Activated CD4-positive, alpha-beta T cell treated with anti-CD3 and anti-CD28 coated beads for 36 hours (primary cell): ENCODE measurements at regions of chr7 and their contacts with region 1.

Region 1: DNA sequence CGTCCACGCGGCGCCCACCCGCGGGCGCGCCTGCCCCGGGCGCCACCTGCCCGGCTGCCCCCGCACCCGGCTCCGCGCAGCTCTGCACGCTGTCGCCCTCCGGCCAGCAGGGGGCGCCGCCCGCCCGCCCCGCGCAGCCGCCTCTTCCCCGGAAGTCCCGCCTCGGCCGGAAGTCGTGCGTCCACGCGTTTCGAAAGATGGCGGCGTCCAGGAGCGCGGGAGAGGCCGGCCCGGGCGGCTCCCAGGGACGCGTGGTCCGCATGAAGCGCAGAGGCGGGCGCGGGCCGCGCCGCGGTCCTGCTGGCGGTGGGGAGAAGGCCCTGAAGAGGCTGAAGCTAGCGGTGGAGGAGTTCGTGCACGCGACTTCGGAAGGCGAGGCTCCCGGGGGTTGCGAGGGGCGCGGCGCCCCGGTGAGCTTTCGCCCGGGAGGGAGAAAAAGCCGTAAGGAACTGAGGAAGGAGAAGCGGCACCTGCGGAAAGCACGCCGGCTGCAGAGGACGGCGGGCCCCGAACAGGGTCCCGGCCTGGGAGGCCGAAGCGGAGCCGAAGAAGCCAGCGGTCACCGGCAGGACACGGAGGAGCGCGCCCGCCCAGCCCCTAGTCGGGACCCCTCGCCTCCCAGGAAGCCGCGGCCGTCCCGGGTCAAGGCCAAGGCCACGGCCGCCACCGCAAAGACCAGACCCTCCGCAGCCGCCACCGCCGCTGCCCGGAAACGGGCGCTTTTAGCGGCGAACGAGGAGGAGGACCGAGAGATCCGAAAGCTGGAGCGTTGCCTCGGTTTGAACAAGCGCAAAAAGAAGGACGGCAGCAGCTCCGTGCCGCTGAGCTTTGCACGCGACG is at the start of gene NOM1:
- DNase-seq: peak; percentile 95
- ATAC-seq: peak; percentile 92
- H3K4me3 Mint-ChIP-seq: peak within 1 kb of the TSS; percentile 94
- H3K27ac Mint-ChIP-seq: peak within 1 kb of the TSS; percentile 84
- H3K4me1 Mint-ChIP-seq: peaks cover 26% of the 10 kb centered on the region
- H3K27me3 Mint-ChIP-seq: peaks cover 5% of the 10 kb centered on the region
- total RNA-seq, gene NOM1: 27.3 to 32.1 TPM

Region 2: GRCh38 chr7:156892821-156893706 is 56.7 kb before region 1 on chr7 and contains the start of gene LMBR1:
- CTCF ChIA-PET with region 1: interaction called, 14 read pairs
- POLR2A ChIA-PET with region 1: interaction called, 4 read pairs
- intact Hi-C with region 1: loop called (anchors 1 to 2 kb)
- DNase-seq: peak; percentile 97
- ATAC-seq: peak; percentile 89
- H3K4me3 Mint-ChIP-seq: peak within 1 kb of the TSS; percentile 88
- H3K27ac Mint-ChIP-seq: peak within 1 kb of the TSS; percentile 90
- H3K4me1 Mint-ChIP-seq: peaks cover 38% of the 10 kb centered on the region
- H3K27me3 Mint-ChIP-seq: no peaks in the 10 kb centered on the region
- total RNA-seq, gene LMBR1: 31.0 to 39.0 TPM

Region 3: DNA sequence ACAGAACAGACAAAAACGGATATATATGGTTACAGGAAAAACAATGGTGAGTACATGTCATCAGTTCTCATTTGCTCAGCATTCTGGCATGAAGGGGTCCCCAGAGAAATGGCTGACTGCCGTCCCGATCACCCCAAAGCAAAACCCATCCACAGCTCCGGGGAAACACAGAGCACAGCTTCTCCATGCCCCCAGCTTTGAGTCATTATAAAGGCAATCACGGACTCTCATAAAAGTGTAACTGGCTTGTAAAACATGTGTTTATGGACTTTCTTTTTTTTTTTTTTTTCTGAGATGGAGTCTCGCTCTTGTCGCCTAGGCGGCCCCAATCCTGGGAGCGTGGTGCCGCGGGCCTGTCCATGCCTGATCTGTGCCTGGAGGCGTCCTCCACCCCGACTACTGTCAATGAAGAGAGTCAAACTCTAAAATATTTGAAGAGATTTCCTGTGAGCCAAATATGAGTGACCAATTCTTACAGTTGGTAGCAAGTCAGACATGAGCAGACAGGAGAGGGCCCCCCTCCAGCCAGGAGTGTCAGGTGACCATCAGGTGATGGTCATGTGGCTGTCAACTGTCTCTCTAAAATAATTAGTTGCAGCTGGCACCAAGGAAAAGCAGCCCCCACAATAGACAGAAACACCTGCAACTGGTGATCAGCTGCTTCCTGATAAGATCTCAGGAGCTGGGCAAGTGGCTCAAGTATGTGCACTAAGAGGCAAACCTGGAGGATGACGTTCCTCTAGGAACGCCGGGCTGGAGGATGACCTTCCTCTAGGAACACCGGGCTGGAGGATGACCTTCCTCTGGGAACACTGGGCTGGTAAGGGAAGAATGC is 22.0 kb before region 1 on chr7:
- CTCF ChIA-PET with region 1: interaction called, 4 read pairs
- POLR2A ChIA-PET with region 1: no interaction called
- intact Hi-C with region 1: loop called in 1 of 2 experiments (anchors 1 kb)
- DNase-seq: no peak
- ATAC-seq: no peak
- H3K4me3 Mint-ChIP-seq: no peak overlapping the region
- H3K27ac Mint-ChIP-seq: no peak overlapping the region
- H3K4me1 Mint-ChIP-seq: peaks cover 34% of the 10 kb centered on the region
- H3K27me3 Mint-ChIP-seq: peaks cover 5% of the 10 kb centered on the region

Region 4: GRCh38 chr7:157010588-157011332 is 61.0 kb after region 1 on chr7 and contains the start of gene MNX1:
- CTCF ChIA-PET with region 1: interaction called, 3 read pairs
- POLR2A ChIA-PET with region 1: interaction called, 3 read pairs
- intact Hi-C with region 1: loop called in 1 of 2 experiments (anchors 2 kb)
- DNase-seq: peak; percentile 73
- ATAC-seq: peak; percentile 83
- H3K4me3 Mint-ChIP-seq: peak within 1 kb of the TSS; percentile 39
- H3K27ac Mint-ChIP-seq: no peak within 1 kb of the TSS
- H3K4me1 Mint-ChIP-seq: peaks cover 15% of the 10 kb centered on the region
- H3K27me3 Mint-ChIP-seq: peaks cover 69% of the 10 kb centered on the region
- total RNA-seq, gene MNX1: not detected

Region 5: GRCh38 chr7:157250605-157251228 is 301.0 kb after region 1 on chr7:
- CTCF ChIA-PET with region 1: no interaction called
- POLR2A ChIA-PET with region 1: no interaction called
- intact Hi-C with region 1: loop called in 1 of 2 experiments (anchors 2 kb)
- DNase-seq: peak; percentile 62
- ATAC-seq: peak; percentile 83
- H3K4me3 Mint-ChIP-seq: no peak overlapping the region
- H3K27ac Mint-ChIP-seq: no peak overlapping the region
- H3K4me1 Mint-ChIP-seq: no peaks in the 10 kb centered on the region
- H3K27me3 Mint-ChIP-seq: no peaks in the 10 kb centered on the region

Region 6: GRCh38 chr7:157386979-157387800 is 437.4 kb after region 1 on chr7:
- CTCF ChIA-PET with region 1: interaction called, 3 read pairs
- POLR2A ChIA-PET with region 1: no interaction called
- intact Hi-C with region 1: loop called in 1 of 2 experiments (anchors 10 kb)
- DNase-seq: peak; percentile 95
- ATAC-seq: peak; percentile 96
- H3K4me3 Mint-ChIP-seq: no peak overlapping the region
- H3K27ac Mint-ChIP-seq: peak overlapping the region; percentile 75
- H3K4me1 Mint-ChIP-seq: peaks cover 36% of the 10 kb centered on the region
- H3K27me3 Mint-ChIP-seq: no peaks in the 10 kb centered on the region